B cell (primary cell): ENCODE measurements at regions of chr19 and their contacts with region 1.

Region 1: DNA sequence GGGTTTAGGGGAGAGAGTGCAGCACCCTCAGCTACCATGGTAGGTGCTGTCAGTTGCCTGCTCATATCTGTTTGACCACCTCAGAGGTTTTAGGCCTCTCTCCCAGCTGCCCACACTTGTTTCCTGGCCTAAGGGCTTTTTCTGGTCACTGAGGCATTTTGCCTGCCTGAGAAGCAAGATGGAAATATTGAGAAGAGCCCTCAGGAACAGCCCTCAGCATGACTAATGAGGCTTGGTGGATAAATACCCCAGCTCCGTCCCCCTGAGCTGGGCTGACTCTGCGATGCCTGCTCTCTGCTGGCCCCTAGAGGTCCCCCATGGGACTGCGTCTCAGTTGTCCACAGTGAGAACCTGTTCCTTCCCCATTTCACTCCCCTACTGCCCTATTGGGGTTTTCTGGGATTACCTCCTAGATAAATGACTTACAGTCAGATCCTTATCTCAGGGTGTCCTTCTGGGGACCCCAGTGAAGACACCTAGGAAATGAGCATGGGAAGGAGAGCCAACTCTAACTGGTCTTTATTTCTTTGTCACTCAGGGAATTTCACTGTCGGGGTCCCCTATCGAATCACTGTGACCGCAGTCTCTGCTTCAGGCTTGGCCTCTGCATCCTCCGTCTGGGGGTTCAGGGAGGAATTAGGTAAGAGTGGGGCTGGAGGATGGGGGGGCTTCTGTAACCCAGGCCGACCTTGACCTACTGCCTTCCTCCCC is 13.3 kb downstream of the PALM3 start:
- DNase-seq: peak; percentile 80
- ATAC-seq: peak; percentile 92
- H3K4me3 ChIP-seq: no peak overlapping the region
- H3K4me3 Mint-ChIP-seq: no peak overlapping the region
- H3K27ac ChIP-seq: no peak overlapping the region
- H3K27ac Mint-ChIP-seq: no peak overlapping the region
- H3K4me1 ChIP-seq: no peaks in the 10 kb centered on the region
- H3K4me1 Mint-ChIP-seq: no peaks in the 10 kb centered on the region
- H3K27me3 ChIP-seq: no peaks in the 10 kb centered on the region
- H3K27me3 Mint-ChIP-seq: no peaks in the 10 kb centered on the region
- CTCF ChIP-seq: peak; percentile 95

Region 2: DNA sequence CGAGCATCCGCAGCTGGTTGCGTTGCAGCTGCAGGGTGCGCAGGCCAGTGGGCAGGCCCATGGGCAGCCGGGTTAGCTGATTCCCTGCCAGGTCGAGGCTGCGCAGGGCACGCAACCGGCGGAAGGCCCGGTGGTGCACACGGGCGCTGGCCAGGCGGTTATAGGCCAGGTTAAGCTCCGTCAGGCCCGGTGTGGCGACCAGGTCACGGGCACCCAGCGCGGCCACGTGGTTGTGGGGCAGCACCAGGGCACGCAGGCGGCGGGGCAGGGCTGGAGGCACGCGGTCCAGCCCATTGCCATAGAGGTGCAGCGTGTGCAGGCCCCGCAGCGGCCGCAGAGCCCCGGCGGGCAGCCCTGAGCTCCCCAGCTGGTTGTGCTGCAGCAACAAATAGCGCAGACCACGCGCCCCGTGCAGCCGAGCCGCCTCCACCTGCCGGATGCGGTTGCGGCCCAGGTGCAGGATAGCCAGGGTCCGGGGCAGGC is 115.6 kb before region 1 on chr19:
- CTCF ChIA-PET with region 1: interaction called, 13 read pairs
- POLR2A ChIA-PET with region 1: no interaction called
- intact Hi-C with region 1: loop called (anchors 1 kb)
- DNase-seq: no peak
- ATAC-seq: no peak
- H3K4me3 ChIP-seq: no peak overlapping the region
- H3K4me3 Mint-ChIP-seq: no peak overlapping the region
- H3K27ac ChIP-seq: no peak overlapping the region
- H3K27ac Mint-ChIP-seq: no peak overlapping the region
- H3K4me1 ChIP-seq: peaks cover 0 to 4% of the 10 kb centered on the region in 2 donors
- H3K4me1 Mint-ChIP-seq: peaks cover 10% of the 10 kb centered on the region
- H3K27me3 ChIP-seq: peaks cover 0 to 13% (median 5%) of the 10 kb centered on the region in 4 experiments
- H3K27me3 Mint-ChIP-seq: peaks cover 13% of the 10 kb centered on the region
- CTCF ChIP-seq: no peak

Region 3: GRCh38 chr19:13959962-13960862 is 88.4 kb before region 1 on chr19:
- CTCF ChIA-PET with region 1: interaction called, 11 read pairs
- POLR2A ChIA-PET with region 1: no interaction called
- intact Hi-C with region 1: no loop called
- DNase-seq: peak; percentile 45
- ATAC-seq: peak; percentile 70
- H3K4me3 ChIP-seq: no peak overlapping the region
- H3K4me3 Mint-ChIP-seq: no peak overlapping the region
- H3K27ac ChIP-seq: no peak overlapping the region
- H3K27ac Mint-ChIP-seq: peak overlapping the region; percentile 41
- H3K4me1 ChIP-seq: no peaks in the 10 kb centered on the region
- H3K4me1 Mint-ChIP-seq: no peaks in the 10 kb centered on the region
- H3K27me3 ChIP-seq: no peaks in the 10 kb centered on the region
- H3K27me3 Mint-ChIP-seq: no peaks in the 10 kb centered on the region
- CTCF ChIP-seq: peak; percentile 28

Region 4: GRCh38 chr19:14059093-14059480 is 10.5 kb after region 1 on chr19:
- CTCF ChIA-PET with region 1: interaction called, 21 read pairs
- POLR2A ChIA-PET with region 1: interaction called, 12 read pairs
- intact Hi-C with region 1: no loop called
- DNase-seq: peak; percentile 68
- ATAC-seq: no peak
- H3K4me3 ChIP-seq: no peak overlapping the region
- H3K4me3 Mint-ChIP-seq: no peak overlapping the region
- H3K27ac ChIP-seq: no peak overlapping the region
- H3K27ac Mint-ChIP-seq: no peak overlapping the region
- H3K4me1 ChIP-seq: peaks cover 18 to 22% of the 10 kb centered on the region in 2 donors
- H3K4me1 Mint-ChIP-seq: peaks cover 18% of the 10 kb centered on the region
- H3K27me3 ChIP-seq: peaks cover 0 to 54% (median 28%) of the 10 kb centered on the region in 4 experiments
- H3K27me3 Mint-ChIP-seq: peaks cover 37% of the 10 kb centered on the region
- CTCF ChIP-seq: peak; percentile 81